Natural killer cell (primary cell): ENCODE measurements at regions of chr19 and their contacts with region 1.

Region 1: DNA sequence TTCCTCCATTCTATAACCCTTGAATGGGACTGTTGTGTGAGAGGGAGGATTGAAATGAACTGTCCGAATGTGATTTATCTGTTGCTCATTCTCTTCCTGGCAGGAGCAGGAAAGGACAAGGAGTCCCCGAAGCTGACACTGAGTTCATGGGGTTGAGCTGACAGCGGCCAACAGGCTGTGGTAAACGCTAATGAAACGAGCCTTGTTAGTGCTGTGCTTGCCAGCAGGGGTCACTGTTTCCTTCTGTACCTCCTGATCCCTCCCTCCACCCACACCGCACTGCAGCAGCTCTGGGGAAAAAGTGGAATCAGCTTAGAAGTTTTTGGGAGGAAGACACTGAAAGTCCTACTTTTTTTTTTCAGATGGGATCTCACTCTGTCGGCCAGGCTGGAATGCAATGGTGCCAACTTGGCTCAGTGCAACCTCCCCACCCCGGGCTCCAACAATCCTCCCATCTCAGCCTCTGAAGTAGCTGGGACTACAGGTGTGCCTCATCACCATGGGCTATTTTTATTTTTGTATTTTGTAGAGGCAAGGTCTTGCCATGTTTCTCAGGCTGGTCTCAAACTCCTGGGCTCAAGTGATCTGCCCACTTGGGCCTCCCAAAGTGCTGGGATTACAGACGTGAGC is 6.7 kb upstream of the ZNF761 start:
- DNase-seq: peak; percentile 47 to 88
- ATAC-seq: peak; percentile 89 to 99 (median 98)
- H3K4me3 ChIP-seq: no peak overlapping the region
- H3K4me3 Mint-ChIP-seq: no peak overlapping the region
- H3K27ac ChIP-seq: no peak overlapping the region
- H3K27ac Mint-ChIP-seq: no peak overlapping the region
- H3K4me1 ChIP-seq: no peaks in the 10 kb centered on the region
- H3K4me1 Mint-ChIP-seq: no peaks in the 10 kb centered on the region
- H3K27me3 ChIP-seq: no peaks in the 10 kb centered on the region
- H3K27me3 Mint-ChIP-seq: no peaks in the 10 kb centered on the region
- CTCF ChIP-seq: peak; percentile 81

Region 2: DNA sequence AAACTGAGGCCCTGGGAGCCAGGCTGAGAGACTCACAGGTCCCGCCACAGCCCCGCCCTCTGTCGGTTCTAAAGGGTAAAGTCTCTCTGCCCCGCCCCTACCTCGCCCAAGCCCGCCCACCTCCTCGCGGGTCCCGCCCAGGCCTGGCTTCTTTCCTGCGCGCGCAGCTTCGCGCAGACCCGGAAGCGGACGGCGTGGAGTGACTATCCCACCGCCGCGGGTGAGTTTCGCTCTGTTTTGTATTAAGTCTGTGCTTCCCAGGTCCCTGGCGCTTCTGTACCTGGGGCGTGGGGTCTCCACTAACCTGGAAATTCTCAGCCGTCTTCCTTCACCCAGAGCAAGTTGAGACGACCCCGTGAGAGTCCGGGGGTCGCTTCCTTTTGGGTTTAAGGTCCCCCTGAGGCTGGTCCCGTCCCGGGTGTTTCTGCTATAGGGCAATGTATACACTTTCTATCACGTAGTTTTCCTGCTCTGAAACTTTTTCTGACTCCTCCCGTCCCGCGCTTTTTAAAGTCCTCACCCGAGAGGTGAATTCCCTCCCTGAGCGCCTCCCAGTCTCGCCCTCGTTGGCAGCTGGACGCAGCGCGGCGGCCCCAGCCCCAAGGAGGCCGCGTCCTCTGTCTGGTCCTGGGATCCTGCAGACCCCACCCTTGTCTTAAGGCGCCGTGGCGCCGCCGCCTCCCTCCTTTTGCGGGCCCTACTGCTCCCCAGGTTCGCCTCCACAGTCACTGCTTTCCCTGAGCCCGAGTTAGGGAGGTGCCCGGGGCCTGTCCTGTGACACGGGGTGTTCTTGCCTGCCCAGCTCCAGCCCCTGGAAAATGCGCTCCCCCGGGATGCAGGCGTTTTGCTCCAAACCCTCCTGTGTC is 29.9 kb before region 1 on chr19 and contains the start of gene ZNF765:
- intact Hi-C with region 1: loop called (anchors 2 kb)
- DNase-seq: peak; percentile 97 to 99
- ATAC-seq: peak; percentile 97 to 99 (median 98)
- H3K4me3 ChIP-seq: peak within 1 kb of the TSS; percentile 74
- H3K4me3 Mint-ChIP-seq: peak within 1 kb of the TSS; percentile 97
- H3K27ac ChIP-seq: peak within 1 kb of the TSS; percentile 62
- H3K27ac Mint-ChIP-seq: peak within 1 kb of the TSS; percentile 90 to 93
- H3K4me1 ChIP-seq: peaks cover 16% of the 10 kb centered on the region
- H3K4me1 Mint-ChIP-seq: peaks cover 19% of the 10 kb centered on the region in 2 donors
- H3K27me3 ChIP-seq: no peaks in the 10 kb centered on the region
- H3K27me3 Mint-ChIP-seq: no peaks in the 10 kb centered on the region
- CTCF ChIP-seq: peak; percentile 57
- total RNA-seq, gene ZNF765: 8.5 to 16.4 (median 11.8) TPM

Region 3: DNA sequence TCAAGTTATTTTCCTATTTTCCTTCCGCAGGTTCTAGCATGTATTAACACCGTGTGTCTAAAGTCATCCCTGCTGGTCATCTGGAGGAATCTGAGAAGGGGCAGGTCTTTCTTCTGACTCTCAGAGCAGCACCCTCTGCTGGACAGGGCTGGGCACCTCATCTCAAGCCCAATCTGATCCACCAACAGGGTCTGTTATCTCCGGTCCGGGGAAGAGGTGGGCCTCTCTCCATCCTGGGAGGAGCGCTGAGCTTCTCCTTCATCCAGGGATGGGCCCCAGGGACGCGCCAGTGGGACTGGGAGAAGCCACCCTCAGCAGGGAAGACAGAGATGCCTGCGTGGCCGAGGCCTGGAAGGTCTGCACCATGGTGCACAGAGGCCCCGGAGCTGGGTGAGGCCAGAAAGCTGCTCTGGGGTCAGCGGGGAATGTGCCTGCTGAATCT is 86.9 kb after region 1 on chr19:
- intact Hi-C with region 1: loop called (anchors 2 kb)
- DNase-seq: peak; percentile 47 to 72
- ATAC-seq: peak; percentile 79 to 99 (median 95)
- H3K4me3 ChIP-seq: no peak overlapping the region
- H3K4me3 Mint-ChIP-seq: no peak overlapping the region
- H3K27ac ChIP-seq: no peak overlapping the region
- H3K27ac Mint-ChIP-seq: no peak overlapping the region
- H3K4me1 ChIP-seq: no peaks in the 10 kb centered on the region
- H3K4me1 Mint-ChIP-seq: no peaks in the 10 kb centered on the region
- H3K27me3 ChIP-seq: no peaks in the 10 kb centered on the region
- H3K27me3 Mint-ChIP-seq: peaks cover 5 to 17% of the 10 kb centered on the region in 2 donors
- CTCF ChIP-seq: peak; percentile 75